ENCODE measurements at regions of chr3 and their contacts with region 1.

Region 1: DNA sequence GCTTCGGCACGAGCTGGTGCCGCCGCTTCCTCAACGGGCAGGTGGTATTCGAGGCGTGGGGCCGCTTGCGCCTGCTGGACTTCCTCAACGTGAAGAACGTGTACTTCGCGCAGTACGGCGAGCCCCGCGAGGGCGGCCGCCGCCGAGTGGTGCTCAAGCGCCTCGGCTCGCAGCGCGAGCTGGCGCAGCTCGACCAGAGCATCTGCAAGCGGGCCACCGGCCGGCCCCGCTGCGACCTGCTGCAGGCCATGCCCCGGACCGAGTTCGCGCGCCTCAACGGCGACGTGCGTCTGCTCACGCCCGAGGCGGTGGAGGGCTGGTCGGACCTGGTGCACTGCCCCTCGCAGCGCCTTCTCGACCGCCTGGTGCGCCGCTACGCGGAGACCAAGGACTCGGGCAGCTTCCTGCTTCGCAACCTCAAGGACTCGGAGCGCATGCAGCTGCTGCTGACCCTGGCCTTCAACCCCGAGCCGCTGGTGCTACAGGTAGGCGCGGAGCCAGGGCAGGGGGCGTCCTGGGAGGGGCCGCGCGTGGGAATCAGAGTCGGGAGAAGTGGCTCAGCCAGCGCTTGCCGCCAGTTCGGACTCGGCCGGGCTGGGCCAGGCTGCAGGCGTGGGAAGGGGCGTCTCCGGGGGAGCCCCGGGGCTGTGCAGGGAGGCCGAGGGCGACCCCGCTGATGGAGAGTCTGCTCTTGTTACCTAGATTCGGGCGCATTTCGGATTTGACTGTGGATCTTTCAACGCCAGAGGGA is 1.1 kb downstream of the DIPK2A start:
- DNase-seq: peak in 9 of 10 donors; percentile 60 to 83 (median 73)
- H3K4me3 ChIP-seq: peak overlapping the region; percentile 77 to 100 (median 95)
- H3K27ac ChIP-seq: peak overlapping the region; percentile 94 to 100 (median 99)
- H3K27me3 ChIP-seq: no peaks in the 10 kb centered on the region
- CTCF ChIP-seq: peak in 51 of 56 donors; percentile 15 to 75 (median 60)

Region 2: DNA sequence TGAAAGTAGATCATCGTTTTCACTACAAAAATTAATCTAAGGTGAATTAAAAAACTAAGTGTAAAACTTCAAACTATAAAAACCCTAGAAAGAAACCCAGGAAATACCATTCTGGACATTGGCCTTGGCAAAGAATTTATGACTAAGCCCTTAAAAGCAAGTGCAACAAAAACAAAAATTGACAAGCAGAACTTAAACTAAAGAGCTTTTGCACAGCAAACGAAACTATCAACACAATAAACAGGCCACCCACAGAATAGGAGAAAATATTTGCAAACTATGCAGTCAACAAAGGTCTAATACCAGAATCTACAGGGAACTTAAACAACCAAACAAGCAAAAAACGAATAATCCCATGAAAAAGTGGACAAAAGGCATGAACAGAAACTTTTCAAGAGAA is 551.1 kb before region 1 on chr3:
- intact Hi-C with region 1: no loop called
- DNase-seq: no peak
- H3K4me3 ChIP-seq: no peak overlapping the region
- H3K27ac ChIP-seq: no peak overlapping the region
- H3K27me3 ChIP-seq: no peaks in the 10 kb centered on the region
- CTCF ChIP-seq: no peak

Region 3: DNA sequence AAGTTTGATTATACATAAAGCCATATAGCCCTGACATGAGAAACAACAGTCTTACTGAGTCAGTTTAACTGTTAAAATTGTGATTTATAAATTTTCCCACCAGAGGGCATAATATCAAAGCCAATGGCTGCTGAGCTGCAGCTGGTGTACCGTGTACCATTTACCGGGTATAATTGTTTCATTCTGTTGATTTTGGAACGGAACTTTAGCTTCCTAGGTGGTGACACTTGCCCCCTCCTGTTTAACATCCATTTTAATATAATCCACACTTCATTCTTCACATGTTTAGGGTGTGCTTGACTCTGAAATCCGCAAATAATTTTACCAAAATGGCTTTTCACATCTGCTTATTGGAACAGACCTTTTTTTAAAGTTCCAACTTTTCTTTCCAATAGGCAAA is 197.2 kb before region 1 on chr3:
- intact Hi-C with region 1: loop called in 1 of 2 experiments (anchors 5 kb)
- DNase-seq: no peak
- H3K4me3 ChIP-seq: peak overlapping the region in 54 of 59 donors; percentile 2 to 61 (median 40)
- H3K27ac ChIP-seq: peak overlapping the region in 5 of 59 donors; percentile 4 to 36 (median 23)
- H3K27me3 ChIP-seq: no peaks in the 10 kb centered on the region
- CTCF ChIP-seq: peak; percentile 50 to 91 (median 74)

Region 4: GRCh38 chr3:144018776-144019175 is 46.1 kb after region 1 on chr3:
- intact Hi-C with region 1: no loop called
- DNase-seq: no peak
- H3K4me3 ChIP-seq: no peak overlapping the region
- H3K27ac ChIP-seq: no peak overlapping the region
- H3K27me3 ChIP-seq: no peaks in the 10 kb centered on the region
- CTCF ChIP-seq: no peak

Region 5: GRCh38 chr3:144109944-144110343 is 137.3 kb after region 1 on chr3:
- intact Hi-C with region 1: loop called (anchors 5 to 10 kb)
- DNase-seq: no peak
- H3K4me3 ChIP-seq: peak overlapping the region in 7 of 59 donors; percentile 2 to 35 (median 13)
- H3K27ac ChIP-seq: peak overlapping the region in 4 of 59 donors; percentile 3 to 75 (median 8)
- H3K27me3 ChIP-seq: no peaks in the 10 kb centered on the region
- CTCF ChIP-seq: no peak

Region 6: DNA sequence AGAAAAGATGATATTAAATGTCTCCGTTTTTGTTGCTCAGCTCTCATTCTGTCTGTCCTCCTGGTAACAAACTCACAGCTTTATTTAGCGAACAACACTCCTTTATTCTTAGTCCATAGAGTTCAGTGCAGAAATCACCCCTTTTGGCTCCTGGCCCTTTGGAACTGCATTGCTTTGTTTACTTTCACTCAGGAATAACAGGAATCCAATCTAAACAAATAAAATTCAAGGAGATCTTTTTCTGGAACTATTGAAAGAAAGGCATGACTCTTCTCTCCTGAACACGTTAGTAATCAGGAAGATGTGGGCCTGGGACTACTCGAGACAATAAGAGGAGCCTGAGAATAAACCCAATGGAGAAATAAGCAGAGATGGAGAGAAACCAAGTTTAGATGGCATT is 408.2 kb after region 1 on chr3:
- intact Hi-C with region 1: loop called in 1 of 2 experiments (anchors 10 kb)
- DNase-seq: peak in 3 of 10 donors; percentile 5 to 58 (median 22)
- H3K4me3 ChIP-seq: peak overlapping the region in 36 of 59 donors; percentile 2 to 53 (median 22)
- H3K27ac ChIP-seq: peak overlapping the region in 56 of 59 donors; percentile 1 to 89 (median 70)
- H3K27me3 ChIP-seq: no peaks in the 10 kb centered on the region
- CTCF ChIP-seq: peak in 4 of 56 donors; percentile 11 to 19 (median 16)

Region 7: GRCh38 chr3:144770915-144771351 is 798.3 kb after region 1 on chr3:
- intact Hi-C with region 1: loop called (anchors 2 to 5 kb)
- DNase-seq: peak in 1 of 10 donors; percentile 22
- H3K4me3 ChIP-seq: peak overlapping the region in 2 of 59 donors; percentile 9
- H3K27ac ChIP-seq: peak overlapping the region in 58 of 59 donors; percentile 7 to 90 (median 78)
- H3K27me3 ChIP-seq: no peaks in the 10 kb centered on the region
- CTCF ChIP-seq: peak; percentile 54 to 87 (median 70)

Measured in dorsolateral prefrontal cortex (tissue), 120 donors.